Activated B cell treated with CpG ODN at 0.5 μM for 24 hours (primary cell): ENCODE measurements at regions of chr9 and their contacts with region 1.

Region 1: DNA sequence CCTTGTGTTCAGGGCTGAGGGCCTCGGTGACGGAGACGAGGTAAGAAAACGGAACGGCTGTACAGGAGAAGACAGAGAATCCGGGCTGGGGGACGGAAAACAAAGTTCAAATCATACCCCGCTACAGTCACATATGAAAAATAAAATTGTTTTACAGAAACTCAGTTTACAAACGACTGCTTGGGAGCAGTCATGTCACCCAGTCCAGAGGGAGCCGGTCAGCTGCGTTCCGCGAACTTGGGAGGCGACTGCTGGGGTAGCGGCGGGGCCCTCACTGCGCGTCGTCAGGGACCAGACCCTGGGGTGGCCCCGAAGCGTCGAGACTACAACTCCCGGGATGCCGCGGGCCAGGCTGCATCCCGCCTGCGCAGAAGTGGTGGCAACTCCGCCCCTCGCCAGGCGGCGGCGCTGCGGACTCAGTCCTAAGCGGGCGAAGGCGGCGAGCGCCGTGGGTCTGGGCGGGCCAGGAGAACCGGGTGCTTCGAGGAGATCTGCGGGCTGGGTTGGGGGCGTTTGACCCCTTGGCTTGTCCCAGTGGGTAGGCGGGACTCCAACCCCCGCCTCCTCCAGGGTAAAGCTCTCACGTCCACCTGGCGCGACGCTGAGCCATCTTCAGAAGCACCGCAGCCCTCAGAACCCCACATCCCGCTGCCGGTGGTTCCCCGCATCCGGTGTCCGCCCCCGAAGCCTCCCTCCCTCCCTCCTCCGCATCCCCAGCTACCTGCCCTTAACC is 4.0 kb downstream of the SIT1 start:
- DNase-seq: peak; percentile 94
- ATAC-seq: peak; percentile 88
- H3K4me3 Mint-ChIP-seq: peak overlapping the region; percentile 97
- H3K27ac Mint-ChIP-seq: peak overlapping the region; percentile 98
- H3K4me1 Mint-ChIP-seq: peaks cover 90% of the 10 kb centered on the region
- H3K27me3 Mint-ChIP-seq: no peaks in the 10 kb centered on the region
- CTCF ChIP-seq: peak; percentile 65

Region 2: GRCh38 chr9:35616681-35617459 is 29.8 kb before region 1 on chr9:
- CTCF ChIA-PET with region 1: interaction called, 162 read pairs
- POLR2A ChIA-PET with region 1: interaction called, 549 read pairs
- intact Hi-C with region 1: loop called (anchors 1 kb)
- DNase-seq: peak; percentile 64
- ATAC-seq: peak; percentile 8
- H3K4me3 Mint-ChIP-seq: peak overlapping the region; percentile 87
- H3K27ac Mint-ChIP-seq: peak overlapping the region; percentile 97
- H3K4me1 Mint-ChIP-seq: peaks cover 98% of the 10 kb centered on the region
- H3K27me3 Mint-ChIP-seq: no peaks in the 10 kb centered on the region
- CTCF ChIP-seq: no peak

Region 3: DNA sequence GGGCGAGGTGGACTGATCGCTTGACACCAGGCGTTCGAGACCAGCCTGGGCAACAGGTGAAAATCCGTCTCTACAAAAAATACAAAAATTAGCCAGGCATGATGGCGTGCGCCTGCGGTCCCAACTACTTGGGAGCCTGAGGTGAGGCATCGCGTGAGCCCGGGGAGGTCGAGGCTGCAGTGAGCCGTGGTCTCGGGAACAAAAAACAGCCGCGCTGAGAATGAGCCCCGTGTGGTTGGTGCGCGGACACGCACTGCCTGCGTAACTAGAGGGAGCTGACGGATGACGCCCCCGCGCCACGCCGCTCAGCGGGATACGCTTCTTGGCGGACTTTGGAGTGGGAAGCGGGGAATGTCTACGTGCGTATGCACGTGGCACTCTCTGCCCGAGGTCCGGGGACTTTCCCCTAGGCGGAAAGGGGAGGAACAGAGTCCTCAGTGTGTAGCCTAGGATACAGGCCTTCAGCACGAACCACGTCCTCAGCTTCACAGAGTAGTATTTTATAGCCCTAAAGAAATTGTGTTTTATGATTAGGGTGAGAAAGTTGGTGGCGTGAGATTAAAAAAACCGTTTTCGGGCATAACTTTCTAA is 10.9 kb after region 1 on chr9 and contains the start of gene RMRP:
- CTCF ChIA-PET with region 1: interaction called, 41 read pairs
- POLR2A ChIA-PET with region 1: interaction called, 112 read pairs
- intact Hi-C with region 1: loop called (anchors 1 kb)
- DNase-seq: peak; percentile 81
- ATAC-seq: peak; percentile 81
- H3K4me3 Mint-ChIP-seq: peak within 1 kb of the TSS; percentile 88
- H3K27ac Mint-ChIP-seq: peak within 1 kb of the TSS; percentile 99
- H3K4me1 Mint-ChIP-seq: peaks cover 78% of the 10 kb centered on the region
- H3K27me3 Mint-ChIP-seq: peaks cover 5% of the 10 kb centered on the region
- CTCF ChIP-seq: no peak
- total RNA-seq, gene RMRP: 8,247 and 9,516 TPM in 2 replicates

Region 4: DNA sequence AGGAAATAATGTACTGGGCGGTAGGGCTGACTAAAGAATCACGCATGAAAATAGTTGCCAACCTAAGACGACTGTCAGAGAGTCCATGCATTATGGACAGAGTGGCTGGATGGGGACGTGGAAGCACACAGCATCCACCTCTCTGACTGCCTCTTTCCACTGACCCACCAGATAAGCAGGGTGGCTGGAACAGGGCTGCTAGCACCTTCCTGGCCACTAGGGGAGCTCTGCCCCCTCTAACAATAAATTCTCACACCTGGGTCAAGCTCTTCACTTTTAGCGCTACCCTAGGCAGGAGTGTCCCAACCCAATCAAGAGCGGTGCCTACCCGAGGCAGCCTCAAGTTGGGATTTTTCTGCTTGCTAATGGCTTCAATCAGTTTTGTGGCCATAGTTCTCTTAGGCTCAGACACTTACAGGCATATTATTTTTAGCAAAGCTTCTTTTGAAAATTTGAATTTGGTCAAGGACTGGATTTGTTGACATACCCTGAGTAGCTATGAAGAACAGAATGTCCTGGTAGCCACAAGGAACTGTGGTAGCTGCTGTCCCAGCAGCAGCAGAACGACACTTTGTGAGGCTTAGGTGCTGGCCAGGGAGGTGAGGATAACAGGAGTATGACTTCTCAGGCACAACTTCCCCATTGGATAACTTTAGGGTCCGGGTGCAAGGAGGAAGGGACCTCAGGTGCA is 50.0 kb after region 1 on chr9:
- CTCF ChIA-PET with region 1: interaction called, 33 read pairs
- POLR2A ChIA-PET with region 1: interaction called, 7 read pairs
- intact Hi-C with region 1: loop called (anchors 1 kb)
- DNase-seq: peak; percentile 50
- ATAC-seq: peak; percentile 98
- H3K4me3 Mint-ChIP-seq: no peak overlapping the region
- H3K27ac Mint-ChIP-seq: peak overlapping the region; percentile 76
- H3K4me1 Mint-ChIP-seq: peaks cover 9% of the 10 kb centered on the region
- H3K27me3 Mint-ChIP-seq: no peaks in the 10 kb centered on the region
- CTCF ChIP-seq: no peak

Region 5: DNA sequence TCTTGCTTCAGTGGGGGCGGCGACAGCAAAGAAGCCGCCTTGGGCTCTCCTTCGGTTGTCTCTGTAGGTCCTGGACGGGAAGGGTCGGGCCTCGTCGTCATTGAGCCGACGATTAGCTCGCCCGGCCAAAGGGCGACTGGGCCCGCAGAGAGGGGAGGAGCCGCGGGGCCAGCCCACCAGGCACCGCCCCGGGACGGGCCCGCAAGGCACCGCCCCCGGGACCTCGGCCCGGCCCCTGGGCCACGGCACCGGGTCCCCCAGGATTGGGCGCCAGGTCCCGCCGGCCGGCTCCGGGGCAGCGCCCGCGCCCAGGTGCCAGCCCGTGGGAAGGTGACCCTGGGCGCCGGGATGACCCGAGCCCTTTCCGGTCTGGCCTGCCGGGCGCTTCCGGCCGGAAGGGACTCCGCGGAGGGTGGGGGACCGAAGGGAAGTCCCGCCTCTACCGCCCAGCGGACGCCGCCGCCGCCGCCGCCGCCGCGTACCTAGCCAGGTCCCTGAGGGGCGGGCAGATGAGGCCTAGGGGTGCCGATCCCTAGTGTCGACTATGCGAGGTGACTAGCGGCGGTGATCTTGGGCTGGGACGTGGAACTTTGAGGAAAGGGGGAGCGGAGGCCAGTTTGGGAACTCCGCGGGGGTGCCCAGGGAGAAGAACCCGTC is 102.3 kb after region 1 on chr9 and contains the starts of genes GBA2 and RGP1:
- CTCF ChIA-PET with region 1: interaction called, 3 read pairs
- POLR2A ChIA-PET with region 1: interaction called, 12 read pairs
- intact Hi-C with region 1: loop called (anchors 5 kb)
- DNase-seq: peak; percentile 84
- ATAC-seq: peak; percentile 84
- H3K4me3 Mint-ChIP-seq: peak within 1 kb of the TSS; percentile 93
- H3K27ac Mint-ChIP-seq: peak within 1 kb of the TSS; percentile 88
- H3K4me1 Mint-ChIP-seq: peaks cover 44% of the 10 kb centered on the region
- H3K27me3 Mint-ChIP-seq: no peaks in the 10 kb centered on the region
- CTCF ChIP-seq: no peak
- total RNA-seq, gene GBA2: 93.4 and 104 TPM in 2 replicates
- total RNA-seq, gene RGP1: 23.8 and 25.4 TPM in 2 replicates

Region 6: DNA sequence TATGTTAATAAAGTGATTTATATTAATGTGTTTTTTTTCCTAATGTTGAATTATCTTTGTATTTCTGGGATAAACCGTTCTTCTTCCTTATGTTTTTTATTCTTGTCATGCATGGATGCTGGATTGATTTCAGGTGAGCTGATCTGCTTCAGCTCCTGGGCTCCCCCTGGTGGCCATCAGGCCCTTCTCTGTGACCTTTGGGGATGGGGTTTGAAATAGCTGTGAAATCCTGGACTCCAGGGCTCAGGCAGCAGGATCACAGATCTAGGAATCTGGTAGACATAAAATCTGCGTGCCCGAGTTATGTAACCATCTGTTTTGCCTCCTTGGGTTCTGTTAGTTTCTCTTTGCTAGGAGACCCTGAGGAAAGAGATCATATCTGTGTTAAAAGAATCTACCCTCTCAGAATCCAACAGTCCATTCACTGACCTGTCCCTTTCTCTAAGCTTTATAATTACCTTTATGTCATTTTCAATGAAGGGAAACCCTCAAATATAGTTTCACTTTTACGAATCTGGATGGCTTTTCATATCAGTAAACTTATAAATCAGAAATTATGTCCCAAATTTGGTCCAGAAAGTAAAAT is 235.7 kb after region 1 on chr9:
- CTCF ChIA-PET with region 1: no interaction called
- POLR2A ChIA-PET with region 1: no interaction called
- intact Hi-C with region 1: loop called (anchors 2 kb)
- DNase-seq: peak; percentile 74
- ATAC-seq: peak; percentile 58
- H3K4me3 Mint-ChIP-seq: no peak overlapping the region
- H3K27ac Mint-ChIP-seq: no peak overlapping the region
- H3K4me1 Mint-ChIP-seq: no peaks in the 10 kb centered on the region
- H3K27me3 Mint-ChIP-seq: peaks cover 10% of the 10 kb centered on the region
- CTCF ChIP-seq: no peak